ENCODE measurements at regions of chr9 and their contacts with region 1.

Region 1: DNA sequence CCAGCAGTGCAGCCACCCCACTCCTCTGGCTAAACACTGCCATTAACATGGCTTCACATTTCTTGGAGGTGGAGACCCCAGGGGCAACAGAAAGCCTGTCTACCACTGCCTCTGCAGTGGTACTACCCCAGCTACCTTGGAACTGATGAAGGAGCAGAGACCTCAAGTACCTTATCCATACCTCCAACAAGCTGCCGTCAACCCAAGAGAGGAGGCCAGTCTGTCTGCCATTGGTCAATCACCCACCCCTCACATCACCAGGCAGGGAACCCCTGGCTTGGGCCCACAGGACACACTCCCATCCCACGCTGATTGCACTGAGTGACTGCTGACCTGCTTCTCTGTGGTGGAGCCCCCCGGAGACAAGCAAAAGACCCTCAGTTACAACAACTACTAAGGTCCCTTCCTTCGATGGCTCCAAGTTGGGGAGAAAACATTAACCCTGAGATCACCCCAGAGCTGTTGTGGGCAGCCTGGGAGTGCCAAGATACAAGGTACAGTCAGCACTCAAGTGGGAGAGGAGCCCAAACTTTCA is 5.6 kb downstream of the IFNA14 start:
- DNase-seq: no peak
- ATAC-seq: no peak
- H3K4me3 Mint-ChIP-seq: no peak overlapping the region
- H3K27ac Mint-ChIP-seq: no peak overlapping the region
- H3K4me1 Mint-ChIP-seq: peaks cover 6% of the 10 kb centered on the region
- H3K27me3 Mint-ChIP-seq: peaks cover 16% of the 10 kb centered on the region

Region 2: GRCh38 chr9:21205204-21205603 is 29.0 kb before region 1 on chr9:
- CTCF ChIA-PET with region 1: no interaction called
- DNase-seq: no peak
- ATAC-seq: no peak
- H3K4me3 Mint-ChIP-seq: no peak overlapping the region
- H3K27ac Mint-ChIP-seq: no peak overlapping the region
- H3K4me1 Mint-ChIP-seq: peaks cover 4% of the 10 kb centered on the region
- H3K27me3 Mint-ChIP-seq: peaks cover 46% of the 10 kb centered on the region

Region 3: DNA sequence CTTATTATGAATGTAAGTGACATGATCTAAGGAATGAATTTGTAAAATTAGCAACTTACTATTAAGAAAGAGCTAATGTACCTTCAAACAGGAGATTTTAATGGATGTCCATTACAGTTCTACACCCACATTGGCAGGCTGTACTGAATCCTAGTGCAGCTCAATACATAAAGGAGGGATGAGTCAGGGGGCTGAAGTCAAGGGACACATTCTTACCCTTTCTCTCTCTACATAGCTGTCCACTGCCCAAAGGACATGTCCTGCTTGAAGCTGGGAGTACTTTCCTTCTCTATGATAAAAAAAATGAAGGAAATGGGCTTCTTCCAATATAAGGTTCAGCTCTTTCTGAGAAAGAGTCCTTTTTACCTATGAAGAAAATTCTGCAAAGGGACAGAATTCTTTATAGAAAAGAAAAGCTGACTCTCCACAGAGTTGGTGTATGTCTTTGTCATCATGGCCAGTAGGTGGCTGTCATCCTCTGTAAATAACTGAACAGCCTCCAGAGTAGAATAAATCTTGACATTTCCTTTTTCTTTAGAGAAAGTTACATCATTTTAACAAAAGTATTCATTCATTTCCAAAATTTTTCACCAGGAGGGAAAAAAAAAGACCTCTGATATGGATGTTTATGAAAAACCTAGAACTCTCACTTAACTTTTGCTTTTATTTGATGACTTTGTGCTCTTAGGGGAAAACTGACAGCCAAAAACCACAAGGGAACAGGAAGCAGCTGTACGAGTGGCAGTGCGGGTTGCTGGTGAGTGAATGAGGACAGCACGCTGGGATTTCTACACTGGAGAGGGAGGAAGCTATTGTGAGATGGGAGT is 18.7 kb after region 1 on chr9:
- CTCF ChIA-PET with region 1: interaction called, 16 read pairs
- DNase-seq: peak; percentile 41
- ATAC-seq: peak; percentile 69
- H3K4me3 Mint-ChIP-seq: no peak overlapping the region
- H3K27ac Mint-ChIP-seq: no peak overlapping the region
- H3K4me1 Mint-ChIP-seq: peaks cover 4% of the 10 kb centered on the region
- H3K27me3 Mint-ChIP-seq: peaks cover 45% of the 10 kb centered on the region